ENCODE measurements at regions of chr11 and their contacts with region 1.

Region 1: DNA sequence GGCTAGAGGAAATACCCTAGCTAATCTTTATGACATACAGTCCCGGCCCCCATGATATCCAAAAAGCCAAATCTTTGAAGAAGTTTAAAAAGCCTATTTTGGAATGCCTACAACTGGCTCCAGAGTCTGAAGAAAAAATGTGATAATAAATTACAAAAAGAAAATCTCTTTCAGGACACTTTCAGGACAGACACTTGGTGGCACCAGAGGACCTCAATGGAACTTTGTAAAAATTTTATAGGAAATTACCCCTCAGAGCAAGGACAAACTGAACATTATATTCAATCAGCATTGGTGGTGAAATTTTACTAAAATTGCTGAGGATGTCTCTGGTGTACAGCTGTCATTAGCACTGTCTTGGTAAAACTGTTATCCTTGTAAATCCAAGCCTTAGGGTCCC is 81.0 kb downstream of the CCDC73 start:
- DNase-seq: peak; percentile 28
- H3K4me3 Mint-ChIP-seq: no peak overlapping the region
- H3K27ac Mint-ChIP-seq: no peak overlapping the region
- H3K4me1 Mint-ChIP-seq: peaks cover 13% of the 10 kb centered on the region
- H3K27me3 Mint-ChIP-seq: no peaks in the 10 kb centered on the region
- CTCF ChIP-seq: peak; percentile 54

Region 2: GRCh38 chr11:32751381-32751780 is 37.9 kb after region 1 on chr11:
- CTCF ChIA-PET with region 1: no interaction called
- intact Hi-C with region 1: loop called (anchors 1 kb)
- DNase-seq: no peak
- H3K4me3 Mint-ChIP-seq: no peak overlapping the region
- H3K27ac Mint-ChIP-seq: no peak overlapping the region
- H3K4me1 Mint-ChIP-seq: no peaks in the 10 kb centered on the region
- H3K27me3 Mint-ChIP-seq: peaks cover 37% of the 10 kb centered on the region
- CTCF ChIP-seq: no peak

Region 3: GRCh38 chr11:33248416-33248971 is 535.0 kb after region 1 on chr11:
- CTCF ChIA-PET with region 1: no interaction called
- intact Hi-C with region 1: no loop called
- DNase-seq: no peak
- H3K4me3 Mint-ChIP-seq: no peak overlapping the region
- H3K27ac Mint-ChIP-seq: no peak overlapping the region
- H3K4me1 Mint-ChIP-seq: no peaks in the 10 kb centered on the region
- H3K27me3 Mint-ChIP-seq: no peaks in the 10 kb centered on the region
- CTCF ChIP-seq: no peak

Measured in Calu3 (cell line).